Breast epithelium (tissue), 4 donors: ENCODE measurements at regions of chr6 and their contacts with region 1.

Region 1: DNA sequence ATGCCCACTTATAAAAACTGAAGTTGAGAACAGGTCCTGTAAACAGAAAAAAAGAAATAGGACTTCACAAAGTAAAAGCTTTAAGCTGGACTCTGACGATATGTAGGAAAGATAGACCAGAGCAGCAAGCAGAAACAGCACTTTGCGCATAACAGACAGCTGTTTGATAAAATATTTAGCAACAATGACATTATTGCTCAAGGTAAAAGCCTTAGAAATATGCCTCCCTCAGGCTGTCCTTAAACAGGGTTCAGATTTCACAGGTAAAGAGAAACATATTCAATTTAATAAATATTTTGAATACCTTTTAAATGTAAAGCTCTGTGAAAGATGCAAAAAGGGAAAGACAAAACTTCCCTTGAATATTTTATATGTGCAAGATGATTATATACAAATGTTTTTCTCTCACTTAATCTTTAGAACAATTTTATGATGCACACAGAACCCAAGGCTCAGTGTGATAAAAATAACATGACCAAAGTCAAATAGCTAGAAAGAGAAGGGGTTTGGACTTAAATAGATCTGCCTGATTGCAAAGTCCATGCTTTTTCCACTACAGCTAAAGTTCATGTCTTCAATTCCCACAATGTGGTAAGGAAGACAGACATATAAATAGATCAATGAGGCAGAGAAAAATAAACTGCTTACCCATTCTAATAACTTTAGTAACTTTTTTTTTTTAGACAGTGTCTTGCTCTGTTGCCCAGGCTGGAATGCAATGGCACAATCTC is 144.0 kb downstream of the CDK19 start:
- DNase-seq: no peak
- H3K4me3 ChIP-seq: no peak overlapping the region
- H3K27ac ChIP-seq: no peak overlapping the region
- H3K4me1 ChIP-seq: no peaks in the 10 kb centered on the region
- H3K27me3 ChIP-seq: no peaks in the 10 kb centered on the region
- CTCF ChIP-seq: no peak
- POLR2A ChIP-seq: no peak

Region 2: DNA sequence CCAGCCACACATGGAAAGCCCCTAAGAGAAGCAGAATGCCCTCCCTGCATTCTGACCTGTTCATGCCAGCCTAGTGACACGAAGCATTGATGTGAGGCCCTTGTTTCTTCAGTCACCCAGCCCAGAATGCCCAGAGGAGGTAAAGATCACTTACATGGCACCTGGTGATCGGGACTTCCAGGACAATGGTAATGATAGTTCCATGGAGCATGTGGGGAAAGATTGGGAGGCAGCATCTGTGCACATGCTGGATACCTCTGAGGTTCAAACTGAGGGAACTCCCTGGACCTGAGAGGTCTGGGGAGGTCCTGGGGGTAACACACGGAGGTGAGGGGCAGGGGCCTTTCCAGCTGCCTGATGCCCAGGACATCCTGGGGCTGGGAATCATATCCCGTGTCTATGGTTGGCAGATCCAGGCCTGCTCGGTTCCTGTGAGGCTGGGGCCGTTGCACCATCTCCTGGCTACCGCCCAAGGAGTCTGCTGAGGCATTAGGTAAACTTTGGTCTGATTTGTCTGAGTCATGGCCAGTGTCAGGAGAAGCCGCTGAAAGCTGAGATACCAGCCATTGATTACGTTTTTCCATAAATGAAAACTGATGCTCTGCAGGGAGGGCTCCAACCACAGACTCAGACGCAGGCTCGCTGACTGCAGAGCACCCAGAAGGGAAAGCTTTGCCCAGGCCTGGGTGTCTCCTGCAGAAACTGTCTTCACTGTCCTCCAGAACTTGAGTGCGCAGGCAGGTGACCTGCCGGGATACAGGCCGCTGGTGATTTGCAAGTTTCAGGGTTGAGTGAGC is 920.0 kb after region 1 on chr6:
- intact Hi-C with region 1: loop called (anchors 10 kb)
- DNase-seq: peak; percentile 92
- H3K4me3 ChIP-seq: peak overlapping the region in 1 of 3 donors; percentile 45
- H3K27ac ChIP-seq: peak overlapping the region; percentile 84 to 92
- H3K4me1 ChIP-seq: peaks cover 13 to 15% of the 10 kb centered on the region in 2 donors
- H3K27me3 ChIP-seq: no peaks in the 10 kb centered on the region
- CTCF ChIP-seq: no peak
- POLR2A ChIP-seq: no peak